Tibial artery (tissue), 4 donors: ENCODE measurements at regions of chr12 and their contacts with region 1.

Region 1: GRCh38 chr12:64362721-64363300 is 27.7 kb downstream of the C12orf56 start:
- DNase-seq: no peak
- H3K4me3 ChIP-seq: no peak overlapping the region
- H3K27ac ChIP-seq: no peak overlapping the region
- H3K4me1 ChIP-seq: no peaks in the 10 kb centered on the region
- H3K27me3 ChIP-seq: no peaks in the 10 kb centered on the region
- CTCF ChIP-seq: no peak

Region 2: DNA sequence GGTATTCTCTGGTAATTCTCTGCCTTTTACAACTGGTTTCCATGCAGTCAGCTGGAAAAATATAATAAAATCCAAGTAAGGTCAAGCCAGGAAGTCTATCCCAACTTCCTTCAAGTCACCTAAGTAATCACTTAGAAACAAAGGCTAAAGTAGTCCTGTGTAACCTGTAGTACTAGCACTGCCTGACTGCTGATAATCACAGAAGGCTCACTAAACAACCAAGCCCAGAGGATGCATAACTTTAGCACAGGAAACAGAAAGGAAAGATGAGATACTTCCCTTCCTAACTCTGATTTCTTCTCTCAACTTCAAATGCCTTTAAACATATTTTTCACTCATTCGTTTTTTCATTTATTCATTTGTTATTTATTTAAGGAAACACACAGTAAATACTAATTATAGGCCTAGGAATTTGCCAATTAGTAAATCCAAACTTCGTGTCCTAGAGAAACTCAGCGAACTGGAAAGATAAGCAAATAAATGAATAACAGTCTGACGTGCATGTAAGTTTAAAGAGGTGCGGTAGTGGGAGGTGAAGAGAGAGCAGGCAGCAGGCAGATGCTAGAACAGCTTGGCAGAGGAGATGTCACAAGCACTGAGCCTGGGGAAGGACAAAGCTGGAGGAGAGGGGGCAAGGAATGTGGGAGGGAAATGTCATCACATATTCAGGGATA is 922.9 kb before region 1 on chr12:
- intact Hi-C with region 1: loop called (anchors 5 kb)
- DNase-seq: no peak
- H3K4me3 ChIP-seq: no peak overlapping the region
- H3K27ac ChIP-seq: no peak overlapping the region
- H3K4me1 ChIP-seq: no peaks in the 10 kb centered on the region
- H3K27me3 ChIP-seq: no peaks in the 10 kb centered on the region
- CTCF ChIP-seq: no peak